HEK293T (cell line): ENCODE measurements at regions of chr4 and their contacts with region 1.

Region 1: GRCh38 chr4:77240469-77241066 is 83.6 kb downstream of the CCNG2 start:
- DNase-seq: peak; percentile 86

Region 2: DNA sequence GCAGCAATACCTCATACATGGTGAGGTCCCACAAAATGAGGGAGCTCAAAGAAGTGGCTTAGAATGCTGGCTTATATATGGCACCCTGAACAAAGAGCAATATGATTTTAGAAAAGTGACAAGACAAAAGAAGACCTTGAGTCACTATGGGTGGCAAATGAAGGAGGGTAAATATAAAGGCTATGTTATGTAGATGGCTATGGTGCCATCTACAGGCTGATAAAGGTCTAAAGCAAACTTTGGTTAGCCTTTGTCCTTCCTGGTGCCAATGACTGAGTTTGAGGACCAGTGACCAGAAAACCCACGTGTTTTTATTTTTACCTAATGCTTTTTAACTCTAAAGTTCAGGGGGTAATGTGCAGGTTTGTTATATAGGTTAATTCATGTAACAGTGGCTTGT is 68.3 kb after region 1 on chr4:
- CTCF ChIA-PET with region 1: interaction called, 12 read pairs
- POLR2A ChIA-PET with region 1: no interaction called
- DNase-seq: peak; percentile 53